ENCODE measurements at regions of chr20 and their contacts with region 1.

Region 1: GRCh38 chr20:9616833-9617489 is 102.6 kb downstream of the LAMP5 start:
- DNase-seq: peak; percentile 67
- ATAC-seq: peak; percentile 80
- H3K4me3 ChIP-seq: no peak overlapping the region
- H3K27ac ChIP-seq: no peak overlapping the region
- H3K4me1 ChIP-seq: no peaks in the 10 kb centered on the region
- H3K27me3 ChIP-seq: no peaks in the 10 kb centered on the region
- CTCF ChIP-seq: peak; percentile 89
- EP300 ChIP-seq: no peak
- POLR2A ChIP-seq: no peak
- RAD21 ChIP-seq: peak; percentile 85

Region 2: GRCh38 chr20:9467995-9468394 is 149.0 kb before region 1 on chr20:
- CTCF ChIA-PET with region 1: no interaction called
- POLR2A ChIA-PET with region 1: no interaction called
- in situ Hi-C with region 1: no loop called
- intact Hi-C with region 1: no loop called
- DNase-seq: peak; percentile 11
- ATAC-seq: peak; percentile 79
- H3K4me3 ChIP-seq: no peak overlapping the region
- H3K27ac ChIP-seq: no peak overlapping the region
- H3K4me1 ChIP-seq: no peaks in the 10 kb centered on the region
- H3K27me3 ChIP-seq: no peaks in the 10 kb centered on the region; a peak in 1 of 5 replicates
- CTCF ChIP-seq: peak; percentile 51
- EP300 ChIP-seq: no peak
- POLR2A ChIP-seq: no peak
- RAD21 ChIP-seq: no peak

Region 3: GRCh38 chr20:9551808-9552550 is 65.0 kb before region 1 on chr20:
- CTCF ChIA-PET with region 1: no interaction called
- POLR2A ChIA-PET with region 1: no interaction called
- in situ Hi-C with region 1: no loop called
- intact Hi-C with region 1: no loop called
- DNase-seq: no peak
- ATAC-seq: no peak
- H3K4me3 ChIP-seq: no peak overlapping the region
- H3K27ac ChIP-seq: no peak overlapping the region
- H3K4me1 ChIP-seq: no peaks in the 10 kb centered on the region
- H3K27me3 ChIP-seq: no peaks in the 10 kb centered on the region; a peak in 3 of 5 replicates
- CTCF ChIP-seq: no peak
- EP300 ChIP-seq: no peak
- POLR2A ChIP-seq: no peak
- RAD21 ChIP-seq: no peak

Region 4: GRCh38 chr20:9912858-9913434 is 296.0 kb after region 1 on chr20:
- CTCF ChIA-PET with region 1: interaction called, 48 read pairs
- POLR2A ChIA-PET with region 1: no interaction called
- in situ Hi-C with region 1: loop called (anchors 5 kb)
- intact Hi-C with region 1: loop called (anchors 1 kb)
- DNase-seq: peak; percentile 59
- ATAC-seq: peak; percentile 77
- H3K4me3 ChIP-seq: no peak overlapping the region
- H3K27ac ChIP-seq: no peak overlapping the region
- H3K4me1 ChIP-seq: no peaks in the 10 kb centered on the region
- H3K27me3 ChIP-seq: no peaks in the 10 kb centered on the region
- CTCF ChIP-seq: peak; percentile 82
- EP300 ChIP-seq: no peak
- POLR2A ChIP-seq: no peak
- RAD21 ChIP-seq: 0 out of 2 replicates have a peak, but pooled peaks have one; percentile 33

Region 5: DNA sequence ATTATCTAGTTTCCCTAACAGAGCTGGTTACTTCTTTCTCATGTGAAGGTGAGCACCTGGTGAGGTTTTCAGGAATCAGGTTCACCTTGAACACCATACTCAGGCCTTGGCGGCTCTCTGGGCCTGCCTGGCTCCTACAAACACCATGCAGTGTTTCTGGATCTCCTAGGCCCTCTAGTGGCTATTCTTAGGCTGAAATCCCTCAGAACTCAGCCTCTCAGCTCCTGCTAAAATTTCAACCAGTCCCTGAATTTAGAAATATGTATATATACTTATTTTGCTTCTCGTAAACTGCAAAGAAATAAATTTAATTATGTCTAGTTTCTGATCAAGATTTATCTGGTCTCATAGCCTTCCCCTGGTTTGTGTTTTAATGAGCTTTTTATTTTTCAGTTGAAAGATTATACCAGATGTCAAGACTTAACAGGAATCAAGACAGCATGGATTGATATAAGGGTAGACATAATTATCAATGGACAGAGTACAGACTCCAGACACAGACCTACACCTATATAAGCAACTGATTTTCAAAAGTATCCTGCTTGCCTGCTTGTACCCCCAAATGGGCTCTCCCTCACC is 473.7 kb after region 1 on chr20:
- CTCF ChIA-PET with region 1: interaction called, 17 read pairs
- POLR2A ChIA-PET with region 1: no interaction called
- in situ Hi-C with region 1: loop called (anchors 5 kb)
- intact Hi-C with region 1: loop called (anchors 1 kb)
- DNase-seq: peak; percentile 63
- ATAC-seq: peak; percentile 99
- H3K4me3 ChIP-seq: no peak overlapping the region
- H3K27ac ChIP-seq: no peak overlapping the region
- H3K4me1 ChIP-seq: no peaks in the 10 kb centered on the region
- H3K27me3 ChIP-seq: no peaks in the 10 kb centered on the region
- CTCF ChIP-seq: peak; percentile 84
- EP300 ChIP-seq: no peak
- POLR2A ChIP-seq: no peak
- RAD21 ChIP-seq: peak; percentile 78

Region 6: DNA sequence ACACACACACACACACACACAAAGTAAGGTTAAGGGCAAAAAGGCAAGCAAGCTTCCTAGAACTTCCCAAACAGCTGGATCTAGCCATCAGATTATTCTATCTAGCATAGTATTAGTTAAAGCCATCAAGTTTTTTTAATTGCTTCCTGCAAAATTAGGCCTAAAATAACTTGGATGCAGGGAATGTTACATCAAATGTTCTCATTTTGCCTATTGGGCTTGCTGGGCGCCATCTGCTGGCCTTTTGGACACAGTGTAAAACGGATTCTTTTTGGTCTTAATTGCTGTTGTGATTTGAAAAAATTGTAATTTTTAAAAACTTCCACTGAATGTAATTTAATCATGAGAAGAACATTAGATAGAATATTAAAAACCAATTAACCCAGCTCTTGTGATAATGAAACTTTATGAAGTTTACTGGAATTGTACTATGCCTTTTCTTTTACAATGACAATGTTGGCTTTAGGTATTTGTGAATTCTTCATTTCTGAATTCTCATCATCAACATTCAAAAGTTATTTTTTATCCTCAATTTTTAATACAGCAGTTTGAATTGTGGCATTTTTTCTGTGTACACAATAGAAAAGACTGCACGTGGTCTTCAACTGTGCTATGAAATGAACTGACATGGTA is 810.2 kb after region 1 on chr20:
- CTCF ChIA-PET with region 1: no interaction called
- POLR2A ChIA-PET with region 1: no interaction called
- in situ Hi-C with region 1: loop called (anchors 10 kb)
- intact Hi-C with region 1: loop called (anchors 2 kb)
- DNase-seq: peak; percentile 71
- ATAC-seq: peak; percentile 42; the same call in 1 of the 3 replicates
- H3K4me3 ChIP-seq: no peak overlapping the region
- H3K27ac ChIP-seq: no peak overlapping the region
- H3K4me1 ChIP-seq: peaks cover 65% of the 10 kb centered on the region
- H3K27me3 ChIP-seq: no peaks in the 10 kb centered on the region
- CTCF ChIP-seq: peak; percentile 83
- EP300 ChIP-seq: no peak
- POLR2A ChIP-seq: no peak
- RAD21 ChIP-seq: peak; percentile 84

Measured in HepG2 (cell line).